Panc1 (cell line): ENCODE measurements at regions of chr3 and their contacts with region 1.

Region 1: DNA sequence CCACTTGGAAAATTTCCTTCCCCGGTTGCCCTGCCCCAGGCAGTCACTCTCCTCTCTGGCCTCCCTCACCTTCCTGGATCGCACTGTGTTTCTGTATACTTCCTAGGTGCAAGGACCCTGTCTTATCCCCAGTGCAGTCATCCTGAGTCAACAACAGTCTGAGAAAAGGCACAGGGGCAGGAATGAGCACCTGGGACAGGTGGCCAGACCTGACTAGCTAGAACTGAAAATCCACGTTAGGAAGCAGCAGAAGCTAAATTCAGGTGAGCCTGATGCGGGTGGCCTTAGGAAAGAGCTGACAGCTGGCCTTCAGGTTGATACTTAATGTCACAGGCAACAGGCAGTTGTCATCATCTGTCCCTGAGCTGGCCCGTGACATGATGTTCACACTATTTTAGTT is 62.9 kb upstream of the VGLL4 start:
- DNase-seq: no peak
- ATAC-seq: no peak
- H3K4me3 ChIP-seq: no peak overlapping the region
- H3K27ac ChIP-seq: no peak overlapping the region
- H3K4me1 ChIP-seq: no peaks in the 10 kb centered on the region
- H3K27me3 ChIP-seq: no peaks in the 10 kb centered on the region
- CTCF ChIP-seq: no peak

Region 2: GRCh38 chr3:11400213-11400612 is 306.4 kb before region 1 on chr3:
- CTCF ChIA-PET with region 1: no interaction called
- POLR2A ChIA-PET with region 1: no interaction called
- in situ Hi-C with region 1: no loop called
- intact Hi-C with region 1: no loop called
- DNase-seq: no peak
- ATAC-seq: no peak
- H3K4me3 ChIP-seq: no peak overlapping the region
- H3K27ac ChIP-seq: no peak overlapping the region
- H3K4me1 ChIP-seq: no peaks in the 10 kb centered on the region
- H3K27me3 ChIP-seq: no peaks in the 10 kb centered on the region
- CTCF ChIP-seq: no peak

Region 3: GRCh38 chr3:11724615-11725342 is 18.2 kb after region 1 on chr3:
- CTCF ChIA-PET with region 1: no interaction called
- POLR2A ChIA-PET with region 1: no interaction called
- in situ Hi-C with region 1: no loop called
- intact Hi-C with region 1: no loop called
- DNase-seq: no peak
- ATAC-seq: no peak
- H3K4me3 ChIP-seq: no peak overlapping the region
- H3K27ac ChIP-seq: no peak overlapping the region
- H3K4me1 ChIP-seq: peaks cover 9% of the 10 kb centered on the region
- H3K27me3 ChIP-seq: peaks cover 2% of the 10 kb centered on the region; the same call in 1 of the 2 replicates
- CTCF ChIP-seq: no peak

Region 4: DNA sequence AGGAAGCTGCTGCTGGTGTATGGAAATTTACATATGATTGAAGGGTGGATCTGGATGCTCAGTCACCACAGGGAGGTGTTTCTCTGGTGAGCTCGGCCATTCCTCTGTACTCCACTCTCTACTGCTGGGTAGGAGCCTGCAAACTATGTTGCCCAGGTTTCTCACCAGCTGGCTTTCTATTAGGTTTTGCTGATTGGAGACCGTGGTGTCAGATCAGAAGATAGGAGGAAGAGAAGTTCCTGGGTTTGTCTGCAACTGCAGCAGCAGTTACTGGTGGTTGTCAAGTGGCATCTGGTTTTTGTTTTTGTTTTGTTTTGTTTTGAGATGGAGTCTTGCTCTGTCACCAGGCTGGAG is 78.4 kb after region 1 on chr3:
- CTCF ChIA-PET with region 1: no interaction called
- POLR2A ChIA-PET with region 1: interaction called, 10 read pairs
- in situ Hi-C with region 1: no loop called
- intact Hi-C with region 1: no loop called
- DNase-seq: no peak
- ATAC-seq: no peak
- H3K4me3 ChIP-seq: no peak overlapping the region
- H3K27ac ChIP-seq: no peak overlapping the region
- H3K4me1 ChIP-seq: no peaks in the 10 kb centered on the region
- H3K27me3 ChIP-seq: no peaks in the 10 kb centered on the region
- CTCF ChIP-seq: no peak